Naive thymus-derived CD4-positive, alpha-beta T cell (primary cell): ENCODE measurements at regions of chr7 and their contacts with region 1.

Region 1: GRCh38 chr7:128862571-128863432 is at the start of gene ATP6V1F:
- DNase-seq: peak; percentile 97 to 100 (median 99)
- ATAC-seq: peak; percentile 93
- H3K4me3 ChIP-seq: peak within 1 kb of the TSS; percentile 88
- H3K4me3 Mint-ChIP-seq: peak within 1 kb of the TSS; percentile 88 to 100 (median 98)
- H3K27ac ChIP-seq: peak within 1 kb of the TSS; percentile 76
- H3K27ac Mint-ChIP-seq: peak within 1 kb of the TSS; percentile 86 to 99 (median 93)
- H3K4me1 ChIP-seq: peaks cover 12 to 15% of the 10 kb centered on the region in 2 donors
- H3K4me1 Mint-ChIP-seq: peaks cover 21 to 38% (median 33%) of the 10 kb centered on the region in 7 donors
- H3K27me3 ChIP-seq: no peaks in the 10 kb centered on the region
- H3K27me3 Mint-ChIP-seq: peaks cover 0 to 3% (median 0%) of the 10 kb centered on the region in 5 donors
- total RNA-seq, gene ATP6V1F: 58.4 to 116 (median 79.1) TPM

Region 2: GRCh38 chr7:127651556-127652332 is 1211.1 kb before region 1 on chr7 and contains the start of gene SND1:
- CTCF ChIA-PET with region 1: no interaction called
- POLR2A ChIA-PET with region 1: no interaction called
- intact Hi-C with region 1: loop called (anchors 2 to 10 kb)
- DNase-seq: peak; percentile 92 to 100 (median 98)
- ATAC-seq: peak; percentile 96
- H3K4me3 ChIP-seq: peak within 1 kb of the TSS; percentile 96
- H3K4me3 Mint-ChIP-seq: peak within 1 kb of the TSS in 6 of 10 donors; percentile 98 to 99 (median 98)
- H3K27ac ChIP-seq: peak within 1 kb of the TSS; percentile 86
- H3K27ac Mint-ChIP-seq: peak within 1 kb of the TSS in 5 of 9 donors; percentile 94 to 99 (median 98)
- H3K4me1 ChIP-seq: peaks cover 22 to 26% of the 10 kb centered on the region in 2 donors
- H3K4me1 Mint-ChIP-seq: peaks cover 5 to 55% (median 43%) of the 10 kb centered on the region in 7 donors
- H3K27me3 ChIP-seq: no peaks in the 10 kb centered on the region
- H3K27me3 Mint-ChIP-seq: peaks cover 0 to 4% (median 0%) of the 10 kb centered on the region in 5 donors
- total RNA-seq, gene SND1: 132 to 253 (median 163) TPM

Region 3: GRCh38 chr7:128455551-128456254 is 407.1 kb before region 1 on chr7 and contains the start of gene HILPDA:
- CTCF ChIA-PET with region 1: no interaction called
- POLR2A ChIA-PET with region 1: no interaction called
- intact Hi-C with region 1: loop called (anchors 5 kb)
- DNase-seq: peak; percentile 90 to 98 (median 93)
- ATAC-seq: peak; percentile 95
- H3K4me3 ChIP-seq: peak within 1 kb of the TSS; percentile 85
- H3K4me3 Mint-ChIP-seq: peak within 1 kb of the TSS; percentile 81 to 96 (median 92)
- H3K27ac ChIP-seq: peak within 1 kb of the TSS; percentile 83
- H3K27ac Mint-ChIP-seq: peak within 1 kb of the TSS; percentile 72 to 98 (median 89)
- H3K4me1 ChIP-seq: peaks cover 12 to 22% of the 10 kb centered on the region in 2 donors
- H3K4me1 Mint-ChIP-seq: peaks cover 13 to 65% (median 22%) of the 10 kb centered on the region in 7 donors
- H3K27me3 ChIP-seq: no peaks in the 10 kb centered on the region
- H3K27me3 Mint-ChIP-seq: peaks cover 0 to 8% (median 0%) of the 10 kb centered on the region in 5 donors
- total RNA-seq, gene HILPDA: 2.4 to 39.5 (median 4.4) TPM

Region 4: GRCh38 chr7:128791121-128791961 is 71.5 kb before region 1 on chr7:
- CTCF ChIA-PET with region 1: no interaction called
- POLR2A ChIA-PET with region 1: interaction called, 4 read pairs
- intact Hi-C with region 1: loop called (anchors 5 kb)
- DNase-seq: peak; percentile 67 to 82 (median 76)
- ATAC-seq: peak; percentile 95
- H3K4me3 ChIP-seq: peak overlapping the region; percentile 64
- H3K4me3 Mint-ChIP-seq: peak overlapping the region; percentile 62 to 90 (median 80)
- H3K27ac ChIP-seq: peak overlapping the region; percentile 68
- H3K27ac Mint-ChIP-seq: peak overlapping the region in 4 of 9 donors; percentile 19 to 80 (median 61)
- H3K4me1 ChIP-seq: peaks cover 0 to 3% of the 10 kb centered on the region in 2 donors
- H3K4me1 Mint-ChIP-seq: peaks cover 6 to 29% (median 12%) of the 10 kb centered on the region in 7 donors
- H3K27me3 ChIP-seq: no peaks in the 10 kb centered on the region
- H3K27me3 Mint-ChIP-seq: peaks cover 0 to 36% (median 0%) of the 10 kb centered on the region in 5 donors

Region 5: DNA sequence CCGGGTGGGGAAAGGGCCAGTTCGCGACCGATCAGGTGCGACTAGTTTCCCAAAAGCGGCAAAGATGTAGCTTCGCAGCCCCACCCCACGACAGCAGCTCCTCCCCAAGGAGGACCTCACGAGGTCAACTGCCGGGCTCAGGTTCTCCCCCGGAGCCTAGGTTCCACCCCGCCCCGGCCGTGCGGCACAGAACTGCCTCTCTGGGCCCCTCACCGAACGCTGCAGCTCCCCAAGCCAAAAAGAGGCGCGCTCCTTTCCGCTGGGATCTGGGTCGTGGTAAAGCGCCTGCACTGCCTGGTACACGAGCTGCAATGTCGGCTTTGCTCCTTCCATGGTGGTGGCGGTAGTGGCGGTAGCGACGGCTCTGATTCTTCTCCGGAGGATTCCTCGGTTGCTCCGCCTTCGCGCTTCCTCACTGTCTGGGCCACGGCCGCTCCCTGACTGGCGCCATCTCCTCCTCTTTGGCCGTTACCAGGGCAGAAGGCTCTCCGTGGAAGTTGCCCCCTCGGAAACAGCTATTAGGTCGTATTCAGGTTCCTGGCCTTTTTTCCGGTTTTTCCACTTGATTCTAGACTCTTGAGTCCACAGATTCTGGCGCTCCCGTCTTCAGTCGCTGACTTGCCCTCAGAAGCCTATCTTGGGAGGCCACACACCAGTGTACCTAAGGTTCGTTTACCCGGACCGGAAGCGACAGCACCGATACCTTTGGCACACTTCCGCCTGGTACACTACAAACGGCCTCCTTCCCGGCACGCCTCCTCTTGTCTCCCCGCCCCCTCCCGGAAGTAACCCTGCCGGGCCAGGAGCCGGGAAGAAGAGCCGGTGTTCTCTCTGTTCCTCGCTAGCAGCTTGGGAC is 191.9 kb after region 1 on chr7 and contains the start of gene TNPO3:
- CTCF ChIA-PET with region 1: no interaction called
- POLR2A ChIA-PET with region 1: no interaction called
- intact Hi-C with region 1: loop called (anchors 1 kb)
- DNase-seq: peak; percentile 76 to 90 (median 85)
- ATAC-seq: peak; percentile 92
- H3K4me3 ChIP-seq: peak within 1 kb of the TSS; percentile 96
- H3K4me3 Mint-ChIP-seq: peak within 1 kb of the TSS; percentile 91 to 99 (median 99)
- H3K27ac ChIP-seq: peak within 1 kb of the TSS; percentile 92
- H3K27ac Mint-ChIP-seq: peak within 1 kb of the TSS; percentile 96 to 100 (median 99)
- H3K4me1 ChIP-seq: peaks cover 15 to 18% of the 10 kb centered on the region in 2 donors
- H3K4me1 Mint-ChIP-seq: peaks cover 17 to 51% (median 39%) of the 10 kb centered on the region in 7 donors
- H3K27me3 ChIP-seq: peaks cover 0 to 3% of the 10 kb centered on the region in 2 donors
- H3K27me3 Mint-ChIP-seq: peaks cover 4 to 13% (median 4%) of the 10 kb centered on the region in 5 donors
- total RNA-seq, gene TNPO3: 28.6 to 40.6 (median 39.6) TPM

Region 6: GRCh38 chr7:129611246-129612111 is 748.7 kb after region 1 on chr7 and contains the start of gene NRF1:
- CTCF ChIA-PET with region 1: no interaction called
- POLR2A ChIA-PET with region 1: no interaction called
- intact Hi-C with region 1: loop called in 1 of 2 experiments (anchors 1 kb)
- DNase-seq: peak; percentile 89 to 97 (median 94)
- ATAC-seq: peak; percentile 92
- H3K4me3 ChIP-seq: peak within 1 kb of the TSS; percentile 87
- H3K4me3 Mint-ChIP-seq: peak within 1 kb of the TSS; percentile 88 to 99 (median 96)
- H3K27ac ChIP-seq: peak within 1 kb of the TSS; percentile 82
- H3K27ac Mint-ChIP-seq: peak within 1 kb of the TSS; percentile 92 to 99 (median 96)
- H3K4me1 ChIP-seq: peaks cover 24 to 38% of the 10 kb centered on the region in 2 donors
- H3K4me1 Mint-ChIP-seq: peaks cover 37 to 79% (median 67%) of the 10 kb centered on the region in 7 donors
- H3K27me3 ChIP-seq: no peaks in the 10 kb centered on the region
- H3K27me3 Mint-ChIP-seq: no peaks in the 10 kb centered on the region
- total RNA-seq, gene NRF1: 25.8 to 49.3 (median 35.3) TPM